HEK293T (cell line): ENCODE measurements at regions of chr2 and their contacts with region 1.

Region 1: GRCh38 chr2:185291035-185291647 is 447.5 kb upstream of the FSIP2 start:
- DNase-seq: peak; percentile 32

Region 2: DNA sequence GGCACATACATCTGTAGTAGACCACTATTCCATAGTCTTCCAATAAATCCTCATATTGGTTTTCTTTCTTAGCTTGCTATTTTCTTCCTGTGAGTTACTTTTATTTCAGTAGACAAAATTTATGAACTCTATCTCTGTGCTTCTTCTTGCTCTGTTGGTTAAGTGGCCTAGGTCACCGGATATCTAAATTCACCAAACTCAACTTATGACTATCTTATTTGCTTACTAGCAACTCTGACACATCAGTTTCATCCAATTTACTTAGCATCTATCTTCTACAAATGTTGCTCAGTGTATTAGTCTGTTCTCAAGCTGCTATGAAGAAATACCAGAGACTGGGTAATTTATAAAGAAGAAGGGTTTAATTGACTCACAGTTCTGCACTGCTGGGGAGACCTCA is 15.0 kb after region 1 on chr2:
- CTCF ChIA-PET with region 1: no interaction called
- POLR2A ChIA-PET with region 1: no interaction called
- DNase-seq: no peak

Region 3: GRCh38 chr2:185738679-185739472 is 447.7 kb after region 1 on chr2 and contains the start of gene FSIP2:
- CTCF ChIA-PET with region 1: interaction called, 10 read pairs
- POLR2A ChIA-PET with region 1: no interaction called
- DNase-seq: peak; percentile 87